CD4-positive, alpha-beta T cell (primary cell): ENCODE measurements at regions of chr10 and their contacts with region 1.

Region 1: DNA sequence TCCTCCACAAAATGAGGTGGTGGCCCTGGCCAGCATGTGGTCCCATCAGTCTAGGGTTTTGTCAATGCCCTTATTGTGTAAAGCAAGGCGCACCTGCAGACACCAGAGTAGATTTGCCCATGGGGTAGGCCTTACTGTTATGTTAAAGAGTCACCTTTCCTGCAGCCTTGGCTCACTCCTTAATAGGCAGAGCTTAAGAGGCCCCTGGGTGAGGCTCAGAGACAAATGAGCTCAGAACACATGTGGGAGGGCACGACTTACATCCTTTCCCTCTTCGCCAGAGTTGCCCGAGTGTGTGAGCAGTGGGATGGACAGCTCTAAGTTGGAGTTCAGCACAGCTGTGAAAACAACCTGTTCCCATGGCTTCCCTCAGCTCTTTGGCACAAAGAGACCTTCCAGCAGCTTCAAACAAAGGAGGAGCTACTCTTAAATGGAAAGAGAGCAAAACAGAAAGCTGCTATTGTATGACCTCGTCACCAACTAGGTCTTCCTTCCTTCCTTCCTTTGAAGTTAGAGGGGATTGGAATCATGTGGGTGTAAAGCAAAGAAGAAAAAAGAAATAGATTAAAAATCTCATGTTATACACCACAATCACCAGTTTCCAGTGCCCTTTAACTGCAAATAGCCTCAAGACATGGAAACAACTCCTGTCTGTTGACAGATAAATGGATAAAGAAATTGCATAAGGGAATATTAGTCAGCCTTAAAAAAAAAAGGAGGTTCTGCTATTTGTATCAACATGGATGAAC is 11.8 kb upstream of the XPNPEP1 start:
- DNase-seq: peak in 4 of 14 experiments; percentile 26 to 73 (median 38)
- ATAC-seq: peak; percentile 54
- H3K4me3 ChIP-seq: peak overlapping the region; percentile 30
- H3K4me3 Mint-ChIP-seq: peak overlapping the region; percentile 82
- H3K27ac ChIP-seq: peak overlapping the region; percentile 21 to 68
- H3K27ac Mint-ChIP-seq: peak overlapping the region; percentile 90
- H3K4me1 ChIP-seq: peaks cover 57% of the 10 kb centered on the region
- H3K4me1 Mint-ChIP-seq: peaks cover 77% of the 10 kb centered on the region
- H3K27me3 ChIP-seq: no peaks in the 10 kb centered on the region
- H3K27me3 Mint-ChIP-seq: no peaks in the 10 kb centered on the region
- CTCF ChIP-seq: no peak

Region 2: GRCh38 chr10:109895095-109895818 is 39.9 kb before region 1 on chr10:
- CTCF ChIA-PET with region 1: no interaction called
- POLR2A ChIA-PET with region 1: no interaction called
- intact Hi-C with region 1: loop called in 1 of 2 experiments (anchors 5 kb)
- DNase-seq: no peak
- ATAC-seq: no peak
- H3K4me3 ChIP-seq: no peak overlapping the region
- H3K4me3 Mint-ChIP-seq: no peak overlapping the region
- H3K27ac ChIP-seq: no peak overlapping the region
- H3K27ac Mint-ChIP-seq: peak overlapping the region; percentile 2
- H3K4me1 ChIP-seq: peaks cover 15% of the 10 kb centered on the region
- H3K4me1 Mint-ChIP-seq: peaks cover 51% of the 10 kb centered on the region
- H3K27me3 ChIP-seq: no peaks in the 10 kb centered on the region
- H3K27me3 Mint-ChIP-seq: no peaks in the 10 kb centered on the region
- CTCF ChIP-seq: no peak

Region 3: GRCh38 chr10:109914966-109915365 is 20.2 kb before region 1 on chr10:
- CTCF ChIA-PET with region 1: no interaction called
- POLR2A ChIA-PET with region 1: interaction called, 21 read pairs
- intact Hi-C with region 1: loop called in 1 of 2 experiments (anchors 1 kb)
- DNase-seq: peak in 12 of 14 experiments; percentile 8 to 88 (median 30)
- ATAC-seq: peak; percentile 95
- H3K4me3 ChIP-seq: no peak overlapping the region
- H3K4me3 Mint-ChIP-seq: peak overlapping the region; percentile 74
- H3K27ac ChIP-seq: peak overlapping the region in 1 of 2 donors; percentile 38
- H3K27ac Mint-ChIP-seq: peak overlapping the region; percentile 71
- H3K4me1 ChIP-seq: peaks cover 48% of the 10 kb centered on the region
- H3K4me1 Mint-ChIP-seq: peaks cover 78% of the 10 kb centered on the region
- H3K27me3 ChIP-seq: no peaks in the 10 kb centered on the region
- H3K27me3 Mint-ChIP-seq: no peaks in the 10 kb centered on the region
- CTCF ChIP-seq: no peak

Region 4: GRCh38 chr10:109922976-109923921 is 11.9 kb before region 1 on chr10 and contains the start of gene XPNPEP1:
- CTCF ChIA-PET with region 1: no interaction called
- POLR2A ChIA-PET with region 1: interaction called, 15 read pairs
- intact Hi-C with region 1: no loop called
- DNase-seq: peak; percentile 48 to 94 (median 68)
- ATAC-seq: peak; percentile 88
- H3K4me3 ChIP-seq: peak within 1 kb of the TSS; percentile 87
- H3K4me3 Mint-ChIP-seq: peak within 1 kb of the TSS; percentile 91
- H3K27ac ChIP-seq: peak within 1 kb of the TSS; percentile 63 to 83
- H3K27ac Mint-ChIP-seq: peak within 1 kb of the TSS; percentile 93
- H3K4me1 ChIP-seq: peaks cover 39% of the 10 kb centered on the region
- H3K4me1 Mint-ChIP-seq: peaks cover 53% of the 10 kb centered on the region
- H3K27me3 ChIP-seq: no peaks in the 10 kb centered on the region
- H3K27me3 Mint-ChIP-seq: no peaks in the 10 kb centered on the region
- CTCF ChIP-seq: no peak
- total RNA-seq, gene XPNPEP1: 50.3 to 54.3 TPM